CD4-positive, alpha-beta T cell (primary cell): ENCODE measurements at regions of chr13 and their contacts with region 1.

Region 1: DNA sequence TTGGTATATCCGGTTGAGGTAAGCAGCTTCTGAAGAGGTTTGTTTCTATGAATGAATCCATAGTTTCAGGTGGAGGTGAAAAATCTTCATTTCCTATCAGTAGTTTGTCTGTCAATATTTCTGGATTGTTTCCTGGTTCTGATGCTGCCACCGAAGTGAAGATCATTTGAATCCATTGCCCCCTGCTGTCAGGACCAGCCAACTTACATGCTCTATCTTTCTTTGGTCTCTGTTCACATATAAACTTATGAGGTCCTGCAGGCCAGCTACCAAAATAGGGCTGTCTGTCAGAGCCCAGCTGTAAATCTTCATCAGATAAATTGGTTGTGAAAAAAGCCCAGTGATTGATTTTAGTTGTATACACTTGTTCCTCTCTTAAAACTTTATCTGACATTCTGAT is 15.2 kb upstream of the N4BP2L1 start:
- DNase-seq: peak in 11 of 14 experiments; percentile 9 to 76 (median 21)
- ATAC-seq: peak; percentile 77
- H3K4me3 ChIP-seq: no peak overlapping the region
- H3K4me3 Mint-ChIP-seq: no peak overlapping the region
- H3K27ac ChIP-seq: no peak overlapping the region
- H3K27ac Mint-ChIP-seq: no peak overlapping the region
- H3K4me1 ChIP-seq: no peaks in the 10 kb centered on the region
- H3K4me1 Mint-ChIP-seq: peaks cover 3% of the 10 kb centered on the region
- H3K27me3 ChIP-seq: no peaks in the 10 kb centered on the region
- H3K27me3 Mint-ChIP-seq: no peaks in the 10 kb centered on the region
- CTCF ChIP-seq: peak; percentile 53

Region 2: GRCh38 chr13:32267836-32268439 is 175.2 kb before region 1 on chr13:
- CTCF ChIA-PET with region 1: no interaction called
- POLR2A ChIA-PET with region 1: no interaction called
- intact Hi-C with region 1: loop called (anchors 1 to 2 kb)
- DNase-seq: peak; percentile 14 to 65 (median 42)
- ATAC-seq: peak; percentile 90
- H3K4me3 ChIP-seq: no peak overlapping the region
- H3K4me3 Mint-ChIP-seq: no peak overlapping the region
- H3K27ac ChIP-seq: no peak overlapping the region
- H3K27ac Mint-ChIP-seq: no peak overlapping the region
- H3K4me1 ChIP-seq: no peaks in the 10 kb centered on the region
- H3K4me1 Mint-ChIP-seq: no peaks in the 10 kb centered on the region
- H3K27me3 ChIP-seq: no peaks in the 10 kb centered on the region
- H3K27me3 Mint-ChIP-seq: no peaks in the 10 kb centered on the region
- CTCF ChIP-seq: peak; percentile 73